Left ventricle myocardium inferior (tissue), 1 donor: ENCODE measurements at regions of chr9 and their contacts with region 1.

Region 1: DNA sequence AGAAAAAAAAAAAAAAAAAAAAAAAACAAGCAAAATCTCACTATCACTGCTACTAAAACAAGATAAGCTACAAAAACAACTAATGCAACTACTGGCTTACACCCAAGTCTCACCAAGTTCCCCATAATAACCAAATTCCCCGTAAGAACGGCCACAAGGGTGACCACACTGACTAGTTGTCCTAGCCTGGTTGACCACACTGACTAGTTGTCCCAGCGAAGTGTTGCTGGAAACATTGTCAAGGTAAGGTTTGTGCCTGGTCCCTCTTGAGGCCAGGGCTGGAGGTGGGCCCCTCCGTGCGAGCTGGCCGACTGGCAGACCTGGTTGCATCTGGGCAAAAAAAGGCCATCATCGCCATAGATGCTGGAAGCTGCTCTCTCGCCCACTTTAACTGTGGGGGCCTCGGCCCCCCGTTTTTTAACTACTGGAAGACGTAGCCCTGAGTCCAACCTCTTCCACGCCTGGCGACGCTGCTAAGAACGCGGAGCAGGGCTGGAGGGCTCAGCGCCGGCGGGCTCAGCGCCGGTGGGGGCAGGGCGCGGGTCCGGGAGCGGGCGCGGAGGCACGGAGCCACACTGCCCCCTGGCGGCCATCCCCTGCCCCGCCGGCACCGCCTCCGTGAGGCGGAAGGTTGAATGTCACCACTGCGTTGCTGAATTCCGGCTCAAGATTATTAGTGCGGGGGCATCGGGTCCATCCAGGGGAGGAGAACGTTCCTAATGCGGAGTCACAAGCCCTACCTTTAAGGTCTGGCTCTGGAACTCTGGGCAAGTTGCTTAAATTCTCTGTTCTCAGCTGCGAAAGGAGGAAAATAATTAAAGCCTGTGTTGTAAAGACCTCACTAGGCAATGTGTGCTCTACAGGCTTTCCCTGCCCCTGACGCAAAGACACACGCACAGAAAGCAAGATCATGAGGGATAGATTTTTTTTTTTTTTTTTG is 84.0 kb downstream of the HSD17B3 start:
- DNase-seq: peak; percentile 82
- H3K4me3 ChIP-seq: peak overlapping the region; percentile 60
- H3K27ac ChIP-seq: peak overlapping the region; percentile 80
- H3K4me1 ChIP-seq: peaks cover 34% of the 10 kb centered on the region
- H3K27me3 ChIP-seq: peaks cover 78% of the 10 kb centered on the region
- CTCF ChIP-seq: peak; percentile 98

Region 2: DNA sequence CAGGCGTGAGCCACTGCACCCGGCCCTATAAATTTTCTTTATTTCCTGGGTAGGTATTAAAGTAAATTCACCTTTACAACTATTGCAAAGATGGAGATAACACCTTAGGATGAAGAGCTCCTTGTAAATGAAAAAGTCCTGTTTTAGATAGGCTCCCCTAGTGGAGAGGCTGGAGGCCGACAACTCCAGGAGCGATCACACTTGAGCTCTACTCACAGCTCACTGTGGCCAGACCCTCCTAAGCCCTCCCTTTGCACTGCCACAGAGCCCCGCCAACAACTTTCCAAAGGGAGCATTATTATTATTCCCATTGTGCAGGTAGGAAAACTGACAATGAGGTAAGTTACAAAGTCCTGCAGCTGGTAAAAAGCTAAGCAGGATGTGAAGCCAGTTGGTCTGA is 481.7 kb before region 1 on chr9:
- intact Hi-C with region 1: loop called (anchors 10 kb)
- DNase-seq: no peak
- H3K4me3 ChIP-seq: no peak overlapping the region
- H3K27ac ChIP-seq: no peak overlapping the region
- H3K4me1 ChIP-seq: no peaks in the 10 kb centered on the region
- H3K27me3 ChIP-seq: peaks cover 32% of the 10 kb centered on the region
- CTCF ChIP-seq: peak; percentile 12

Region 3: DNA sequence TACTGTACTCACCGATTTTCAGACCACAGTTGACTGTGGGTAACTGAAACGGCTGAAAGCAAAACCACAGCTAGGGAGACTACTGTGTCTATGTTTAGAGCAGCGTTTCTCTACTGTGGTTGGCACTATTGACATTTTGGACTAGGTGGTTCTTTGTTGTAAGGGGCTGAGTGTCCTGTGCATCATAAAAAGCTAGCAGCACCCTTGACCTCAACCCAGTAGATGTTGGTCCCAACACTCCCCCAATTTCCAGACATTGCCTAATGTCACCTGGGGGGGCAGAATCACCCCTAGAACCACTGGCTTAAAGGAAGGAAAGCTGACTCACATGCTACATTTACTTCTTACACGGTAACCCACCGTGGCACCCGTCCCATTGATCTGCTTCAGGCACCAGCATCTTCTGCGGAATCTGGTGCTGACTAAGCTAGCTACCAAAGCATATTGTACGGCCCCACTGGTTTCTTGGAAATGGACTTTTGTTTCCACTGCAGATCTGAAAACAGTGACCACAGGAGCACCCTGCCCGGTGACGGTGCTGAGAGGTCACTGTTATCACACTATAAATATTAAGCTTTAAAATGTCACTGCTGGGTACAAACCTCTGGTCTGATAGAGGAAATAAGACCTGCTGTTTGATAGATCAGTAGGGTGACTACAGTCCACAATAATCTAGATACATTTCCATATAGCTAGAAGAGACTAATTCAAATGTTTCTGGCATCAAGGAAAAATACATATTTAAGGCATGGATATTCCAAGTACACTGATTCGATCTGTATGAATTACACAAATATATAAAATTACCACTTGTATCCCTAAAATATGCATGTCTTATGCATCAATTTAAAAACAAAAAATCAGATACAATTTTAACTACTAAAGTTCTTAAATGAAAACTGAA is 67.4 kb before region 1 on chr9:
- intact Hi-C with region 1: loop called (anchors 10 kb)
- DNase-seq: no peak
- H3K4me3 ChIP-seq: no peak overlapping the region
- H3K27ac ChIP-seq: no peak overlapping the region
- H3K4me1 ChIP-seq: peaks cover 4% of the 10 kb centered on the region
- H3K27me3 ChIP-seq: peaks cover 58% of the 10 kb centered on the region
- CTCF ChIP-seq: no peak

Region 4: DNA sequence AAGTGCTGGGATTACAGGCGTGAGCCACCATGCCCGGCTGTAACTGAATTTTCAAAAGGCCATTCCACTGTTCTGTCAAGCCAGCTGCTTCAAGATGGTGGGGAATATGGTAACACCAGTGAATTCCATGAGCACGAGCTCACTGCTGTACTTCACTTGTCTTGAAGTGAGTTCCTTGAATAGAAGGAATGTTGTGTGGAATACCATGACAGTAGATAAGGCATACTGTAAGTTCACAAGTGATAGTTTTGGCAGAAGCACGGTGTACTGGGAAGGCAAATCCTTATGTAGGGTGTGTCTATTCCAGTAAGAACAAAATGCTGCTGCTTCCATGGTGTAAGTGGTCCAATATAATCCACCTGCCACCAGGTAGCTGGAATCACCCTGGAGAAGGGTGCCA is 443.7 kb after region 1 on chr9:
- intact Hi-C with region 1: no loop called
- DNase-seq: no peak
- H3K4me3 ChIP-seq: no peak overlapping the region
- H3K27ac ChIP-seq: no peak overlapping the region
- H3K4me1 ChIP-seq: peaks cover 8% of the 10 kb centered on the region
- H3K27me3 ChIP-seq: no peaks in the 10 kb centered on the region
- CTCF ChIP-seq: no peak